ENCODE measurements at regions of chr13 and their contacts with region 1.

Region 1: GRCh38 chr13:78121459-78122348 is 203.1 kb upstream of the EDNRB start:
- H3K4me3 Mint-ChIP-seq: no peak overlapping the region
- H3K27ac Mint-ChIP-seq: no peak overlapping the region
- H3K4me1 Mint-ChIP-seq: peaks cover 15% of the 10 kb centered on the region
- H3K27me3 Mint-ChIP-seq: no peaks in the 10 kb centered on the region

Region 2: DNA sequence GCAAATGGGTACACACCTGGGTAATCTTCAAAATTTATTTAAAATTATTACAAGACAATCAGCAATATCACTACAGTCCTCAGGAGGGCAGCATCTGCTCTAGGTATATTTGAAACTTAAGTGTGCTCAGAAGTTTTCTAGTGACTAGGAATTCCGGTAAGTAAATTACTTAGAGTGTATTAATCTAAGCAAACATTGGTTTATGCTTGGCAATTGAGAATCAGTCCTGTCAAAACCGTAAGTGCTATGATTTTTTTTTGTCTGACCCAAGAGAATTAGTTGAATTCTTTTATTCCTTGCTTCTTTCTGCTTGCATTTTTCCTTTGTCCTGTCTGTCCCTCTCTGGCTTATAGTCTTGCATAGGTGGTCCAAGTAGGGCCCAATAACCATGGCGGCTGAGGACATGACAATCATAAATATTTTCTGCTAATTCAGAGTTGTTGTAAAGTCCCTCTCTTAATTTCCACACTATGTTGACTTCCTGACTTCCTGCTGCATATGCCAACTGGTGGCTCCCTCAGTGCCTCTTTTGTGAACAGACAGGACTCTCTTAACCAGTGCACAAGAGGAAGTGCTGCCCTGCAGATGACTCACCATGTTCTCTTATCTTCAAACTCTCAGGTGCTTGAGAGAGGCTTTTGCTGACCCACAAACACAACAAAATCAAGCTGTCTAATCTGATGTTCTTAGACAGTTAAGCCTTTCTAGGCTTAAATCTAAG is 342.0 kb before region 1 on chr13:
- intact Hi-C with region 1: loop called (anchors 1 kb)
- H3K4me3 Mint-ChIP-seq: no peak overlapping the region
- H3K27ac Mint-ChIP-seq: no peak overlapping the region
- H3K4me1 Mint-ChIP-seq: peaks cover 7% of the 10 kb centered on the region
- H3K27me3 Mint-ChIP-seq: no peaks in the 10 kb centered on the region